ENCODE measurements at regions of chr2 and their contacts with region 1.

Region 1: DNA sequence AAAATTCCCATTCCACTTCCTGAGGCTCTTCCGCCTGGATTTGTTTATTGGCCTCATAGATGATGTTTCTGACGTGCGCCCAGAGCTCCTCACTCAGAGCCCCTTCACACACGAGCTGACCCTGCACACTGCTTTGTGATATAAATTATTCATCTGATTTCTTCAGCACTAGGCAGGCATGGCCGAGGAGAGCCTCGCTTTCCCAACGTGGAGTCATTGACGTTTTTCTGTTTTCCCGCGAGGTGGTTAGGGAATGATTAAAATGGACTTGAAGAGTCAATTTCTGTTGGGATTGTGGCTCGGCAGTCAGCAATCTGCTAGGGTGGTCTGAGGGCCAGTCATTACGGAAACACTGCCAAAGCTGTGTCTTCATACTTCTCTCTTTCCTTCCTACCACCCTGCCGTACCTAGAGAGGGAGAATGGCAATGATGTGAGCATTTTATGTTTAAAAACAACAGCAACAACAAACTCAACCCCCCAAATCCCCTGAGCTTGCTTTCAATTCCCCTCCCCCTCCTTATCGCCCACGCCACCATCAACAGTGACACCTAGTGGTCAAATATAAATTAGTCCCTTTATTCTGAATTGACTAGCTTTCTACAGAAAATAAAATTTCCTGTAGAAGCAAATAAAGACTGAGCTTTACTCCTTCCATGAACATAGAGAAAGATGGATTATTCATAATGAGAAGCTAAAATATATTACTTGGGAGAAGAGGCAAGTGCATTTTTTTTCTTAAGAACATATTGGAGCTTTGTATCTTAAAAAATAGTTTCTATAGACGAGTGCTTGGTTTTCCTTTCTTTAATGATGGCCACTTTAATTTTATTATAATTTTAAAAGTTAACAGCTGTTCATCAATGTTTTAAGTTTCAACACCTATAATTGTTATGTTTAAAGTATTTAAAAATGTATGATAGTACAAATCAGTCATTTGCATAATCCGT is 285.1 kb downstream of the MTX2 start:
- DNase-seq: peak; percentile 45
- H3K4me3 Mint-ChIP-seq: peak overlapping the region; percentile 72
- H3K27ac Mint-ChIP-seq: no peak overlapping the region
- H3K4me1 Mint-ChIP-seq: peaks cover 12% of the 10 kb centered on the region
- H3K27me3 Mint-ChIP-seq: peaks cover 39% of the 10 kb centered on the region

Region 2: GRCh38 chr2:176269319-176270099 is 284.9 kb before region 1 on chr2 and contains the start of gene MTX2:
- CTCF ChIA-PET with region 1: no interaction called
- intact Hi-C with region 1: loop called (anchors 2 kb)
- DNase-seq: peak; percentile 76
- H3K4me3 Mint-ChIP-seq: peak within 1 kb of the TSS; percentile 97
- H3K27ac Mint-ChIP-seq: peak within 1 kb of the TSS; percentile 88
- H3K4me1 Mint-ChIP-seq: peaks cover 20% of the 10 kb centered on the region
- H3K27me3 Mint-ChIP-seq: no peaks in the 10 kb centered on the region
- total RNA-seq, gene MTX2: 24.3 to 28.1 TPM

Region 3: GRCh38 chr2:176454893-176455811 is 99.2 kb before region 1 on chr2:
- CTCF ChIA-PET with region 1: interaction called, 10 read pairs
- intact Hi-C with region 1: loop called (anchors 2 kb)
- DNase-seq: peak; percentile 92
- H3K4me3 Mint-ChIP-seq: no peak overlapping the region
- H3K27ac Mint-ChIP-seq: no peak overlapping the region
- H3K4me1 Mint-ChIP-seq: peaks cover 2% of the 10 kb centered on the region
- H3K27me3 Mint-ChIP-seq: peaks cover 37% of the 10 kb centered on the region

Region 4: GRCh38 chr2:176473177-176473576 is 81.2 kb before region 1 on chr2:
- CTCF ChIA-PET with region 1: interaction called, 4 read pairs
- intact Hi-C with region 1: loop called (anchors 1 kb)
- DNase-seq: peak; percentile 38
- H3K4me3 Mint-ChIP-seq: peak overlapping the region; percentile 56
- H3K27ac Mint-ChIP-seq: peak overlapping the region; percentile 25
- H3K4me1 Mint-ChIP-seq: peaks cover 13% of the 10 kb centered on the region
- H3K27me3 Mint-ChIP-seq: no peaks in the 10 kb centered on the region

Region 5: GRCh38 chr2:177078416-177078815 is 524.0 kb after region 1 on chr2:
- CTCF ChIA-PET with region 1: no interaction called
- intact Hi-C with region 1: no loop called
- DNase-seq: no peak
- H3K4me3 Mint-ChIP-seq: no peak overlapping the region
- H3K27ac Mint-ChIP-seq: no peak overlapping the region
- H3K4me1 Mint-ChIP-seq: no peaks in the 10 kb centered on the region
- H3K27me3 Mint-ChIP-seq: peaks cover 12% of the 10 kb centered on the region

Measured in activated naive CD4-positive, alpha-beta T cell treated with anti-CD3 and anti-CD28 coated beads for 36 hours (primary cell).